Common myeloid progenitor, CD34-positive (primary cell): ENCODE measurements at regions of chr10 and their contacts with region 1.

Region 1: DNA sequence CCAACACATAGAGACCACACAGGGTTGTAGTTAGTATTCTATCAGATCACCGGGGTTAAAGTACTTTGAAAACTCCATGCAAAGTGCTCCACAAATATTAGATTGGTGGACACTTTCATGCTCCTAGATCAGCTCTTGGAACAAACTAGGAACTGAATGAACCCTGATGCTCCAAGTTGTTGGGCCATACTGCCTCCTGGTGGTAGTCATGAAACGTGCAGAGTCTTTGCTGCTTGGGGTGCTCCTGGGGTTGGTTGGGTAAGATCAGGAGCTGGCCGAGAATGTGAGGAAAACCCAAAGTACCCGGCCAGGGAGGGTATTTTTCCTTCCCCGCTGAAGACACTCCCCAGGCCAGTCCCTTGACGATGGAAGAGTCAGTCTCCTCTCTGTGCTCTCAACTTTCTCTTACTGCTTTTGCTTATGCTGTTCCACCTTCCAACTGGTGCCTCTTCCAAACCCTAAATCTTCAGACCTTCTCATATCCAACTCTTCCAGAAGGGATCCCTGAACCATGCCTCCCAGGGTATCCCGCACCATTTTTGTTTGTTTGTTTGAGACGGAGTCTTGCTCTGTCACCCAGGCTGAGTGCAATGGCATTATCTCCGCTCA is 920 bp upstream of the RPEL1 start:
- DNase-seq: peak; percentile 78 to 88 (median 83)
- H3K4me3 ChIP-seq: peak overlapping the region in 1 of 7 experiments; percentile 10
- H3K27ac ChIP-seq: no peak overlapping the region
- H3K4me1 ChIP-seq: peaks cover 8 to 29% (median 27%) of the 10 kb centered on the region in 4 experiments
- H3K27me3 ChIP-seq: no peaks in the 10 kb centered on the region

Region 2: GRCh38 chr10:102998005-102998404 is 246.8 kb before region 1 on chr10:
- CTCF ChIA-PET with region 1: no interaction called
- POLR2A ChIA-PET with region 1: no interaction called
- DNase-seq: no peak
- H3K4me3 ChIP-seq: no peak overlapping the region
- H3K27ac ChIP-seq: no peak overlapping the region
- H3K4me1 ChIP-seq: peaks cover 0 to 7% (median 5%) of the 10 kb centered on the region in 4 experiments
- H3K27me3 ChIP-seq: no peaks in the 10 kb centered on the region

Region 3: GRCh38 chr10:103111031-103111917 is 133.5 kb before region 1 on chr10:
- CTCF ChIA-PET with region 1: interaction called, 11 read pairs
- POLR2A ChIA-PET with region 1: interaction called, 3 read pairs
- DNase-seq: no peak
- H3K4me3 ChIP-seq: no peak overlapping the region
- H3K27ac ChIP-seq: no peak overlapping the region
- H3K4me1 ChIP-seq: no peaks in the 10 kb centered on the region
- H3K27me3 ChIP-seq: no peaks in the 10 kb centered on the region

Region 4: DNA sequence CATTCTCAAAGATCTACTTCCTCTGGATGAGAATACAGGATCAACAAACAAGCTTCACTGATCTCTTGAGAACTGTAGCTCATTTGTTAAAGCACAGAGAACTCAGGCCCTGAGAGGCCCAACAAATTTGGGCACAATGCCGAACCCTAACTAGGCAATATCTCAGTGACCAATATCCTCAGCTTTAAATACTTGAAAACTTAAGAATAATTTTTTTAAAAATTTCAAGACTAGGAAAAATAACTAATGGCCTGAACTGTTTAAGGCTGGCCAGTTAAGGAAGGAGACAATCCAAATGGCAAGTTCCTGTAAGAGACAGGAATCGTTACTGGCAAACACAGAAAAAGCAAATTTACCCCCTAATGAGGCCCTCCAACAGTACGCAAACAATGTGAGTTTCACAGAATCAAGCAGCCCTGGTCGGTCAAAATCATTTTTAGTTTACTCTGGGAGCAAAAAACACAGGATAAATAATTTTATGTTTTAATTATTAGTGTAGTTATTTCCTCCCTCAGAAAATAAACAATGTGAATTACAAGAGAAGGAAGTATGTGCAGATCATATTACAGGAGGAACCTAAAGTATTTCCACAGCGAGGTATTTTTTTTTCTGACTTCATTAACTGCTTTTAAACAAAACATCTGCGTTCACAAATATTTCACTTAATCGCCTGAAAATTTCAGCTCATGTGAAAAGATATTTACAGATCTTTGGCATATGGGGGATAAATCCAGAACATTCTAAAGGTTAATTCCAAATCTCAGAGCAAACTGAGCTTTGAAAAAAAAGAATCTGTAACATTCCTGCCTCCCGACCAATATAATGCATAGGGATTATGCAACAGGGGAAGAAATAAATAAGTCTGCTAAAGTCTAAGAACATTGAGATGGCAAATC is 91.2 kb before region 1 on chr10:
- CTCF ChIA-PET with region 1: interaction called, 11 read pairs
- POLR2A ChIA-PET with region 1: interaction called, 5 read pairs
- DNase-seq: no peak
- H3K4me3 ChIP-seq: peak overlapping the region in 3 of 7 experiments; percentile 13 to 31 (median 20)
- H3K27ac ChIP-seq: peak overlapping the region; percentile 50 to 69
- H3K4me1 ChIP-seq: peaks cover 13 to 25% (median 23%) of the 10 kb centered on the region in 4 experiments
- H3K27me3 ChIP-seq: no peaks in the 10 kb centered on the region

Region 5: GRCh38 chr10:103175580-103176285 is 69.0 kb before region 1 on chr10:
- CTCF ChIA-PET with region 1: interaction called, 12 read pairs
- POLR2A ChIA-PET with region 1: interaction called, 3 read pairs
- DNase-seq: no peak
- H3K4me3 ChIP-seq: no peak overlapping the region
- H3K27ac ChIP-seq: peak overlapping the region in 1 of 2 experiments; percentile 68
- H3K4me1 ChIP-seq: peaks cover 16 to 52% (median 31%) of the 10 kb centered on the region in 4 experiments
- H3K27me3 ChIP-seq: no peaks in the 10 kb centered on the region

Region 6: GRCh38 chr10:103192451-103193106 is 52.2 kb before region 1 on chr10:
- CTCF ChIA-PET with region 1: interaction called, 19 read pairs
- POLR2A ChIA-PET with region 1: interaction called, 10 read pairs
- DNase-seq: peak; percentile 72 to 91 (median 87)
- H3K4me3 ChIP-seq: peak overlapping the region; percentile 84 to 93 (median 89)
- H3K27ac ChIP-seq: peak overlapping the region; percentile 90 to 96
- H3K4me1 ChIP-seq: peaks cover 35 to 61% (median 44%) of the 10 kb centered on the region in 4 experiments
- H3K27me3 ChIP-seq: no peaks in the 10 kb centered on the region